Sciatic nerve (tissue), 2 donors: ENCODE measurements at regions of chr7 and their contacts with region 1.

Region 1: DNA sequence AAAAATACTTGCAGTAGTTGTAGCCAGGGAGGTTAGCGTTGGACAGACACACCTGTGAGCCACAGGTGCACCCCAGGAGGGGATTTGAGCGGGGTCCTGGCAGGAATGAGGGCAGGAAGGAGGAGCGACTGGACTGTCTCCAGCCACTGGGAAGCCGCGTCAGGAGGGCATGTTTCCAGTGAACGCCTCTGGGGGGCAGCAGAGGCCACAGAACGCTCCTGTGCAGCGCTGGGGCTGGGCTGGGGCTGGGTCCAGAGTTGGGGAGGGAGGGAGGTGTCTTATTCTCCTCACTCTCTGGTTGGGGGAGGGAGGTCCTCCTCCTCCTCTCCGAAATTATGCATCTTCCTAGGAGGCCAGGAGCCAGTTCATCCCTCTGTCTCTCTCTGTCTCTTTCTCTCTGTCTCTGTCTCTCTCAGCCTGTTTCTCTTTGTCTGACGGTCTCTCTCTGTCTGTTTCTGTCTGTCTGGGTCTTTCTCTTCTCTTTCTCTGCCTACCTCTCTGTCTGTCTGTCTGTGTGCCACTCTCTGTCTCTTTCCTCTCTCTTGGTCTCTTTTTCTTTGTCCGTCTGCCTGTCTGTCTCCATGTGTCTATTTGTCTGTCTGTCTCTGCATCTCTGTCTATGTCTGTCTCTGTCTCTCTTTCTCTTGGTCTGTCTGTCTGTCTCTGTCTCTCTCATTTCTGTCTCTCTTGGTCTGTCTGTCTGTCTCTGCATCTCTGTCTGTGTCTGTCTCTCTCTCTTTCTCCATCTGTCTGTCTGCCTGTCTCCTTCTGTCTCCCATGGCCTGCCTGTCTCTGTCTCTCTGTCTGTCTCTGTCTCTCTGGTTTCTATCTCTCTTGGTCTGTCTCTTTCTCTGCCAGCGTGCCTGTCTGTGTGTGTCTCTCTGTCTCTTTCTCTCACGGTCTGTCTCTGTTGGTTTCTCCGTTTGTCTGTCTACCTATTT is 9.9 kb upstream of the PSMG3 start:
- DNase-seq: peak; percentile 86
- ATAC-seq: peak; percentile 92

Region 2: DNA sequence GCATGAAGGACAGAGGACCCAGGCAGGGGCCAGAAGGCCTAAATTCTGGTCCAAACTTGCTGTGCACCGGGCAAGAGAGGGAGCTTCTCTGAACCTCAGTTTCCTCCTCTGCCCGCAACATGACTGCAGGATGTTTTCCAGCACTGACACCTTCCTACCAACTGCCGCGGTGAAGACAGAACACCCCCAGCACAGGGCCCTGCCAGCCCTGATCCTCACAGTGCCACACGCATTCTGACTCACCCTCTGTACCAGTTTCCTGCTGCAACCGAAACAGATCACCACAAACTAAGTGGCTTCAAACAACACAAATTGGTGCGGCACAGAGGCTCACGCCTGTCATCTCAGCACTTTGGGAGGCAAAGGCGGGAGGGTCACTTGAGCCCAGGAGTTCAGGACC is 634.9 kb after region 1 on chr7:
- intact Hi-C with region 1: loop called (anchors 5 kb)
- DNase-seq: no peak
- ATAC-seq: no peak